Activated CD4-positive, alpha-beta T cell treated with anti-CD3 and anti-CD28 coated beads, Interleukin-2, amount 10 ng/mL, durations not matched to agents 24 days and 14 days (primary cell): ENCODE measurements at regions of chr5 and their contacts with region 1.

Region 1: GRCh38 chr5:80960531-80961375 is 590 bp downstream of the RASGRF2 start:
- DNase-seq: peak; percentile 84
- H3K4me3 Mint-ChIP-seq: peak overlapping the region; percentile 89
- H3K27ac Mint-ChIP-seq: peak overlapping the region; percentile 82
- H3K4me1 Mint-ChIP-seq: peaks cover 48% of the 10 kb centered on the region
- H3K27me3 Mint-ChIP-seq: peaks cover 5% of the 10 kb centered on the region

Region 2: GRCh38 chr5:80754900-80755299 is 205.9 kb before region 1 on chr5:
- intact Hi-C with region 1: loop called (anchors 1 kb)
- DNase-seq: peak; percentile 79
- H3K4me3 Mint-ChIP-seq: peak overlapping the region; percentile 66
- H3K27ac Mint-ChIP-seq: peak overlapping the region; percentile 96
- H3K4me1 Mint-ChIP-seq: peaks cover 63% of the 10 kb centered on the region
- H3K27me3 Mint-ChIP-seq: no peaks in the 10 kb centered on the region

Region 3: DNA sequence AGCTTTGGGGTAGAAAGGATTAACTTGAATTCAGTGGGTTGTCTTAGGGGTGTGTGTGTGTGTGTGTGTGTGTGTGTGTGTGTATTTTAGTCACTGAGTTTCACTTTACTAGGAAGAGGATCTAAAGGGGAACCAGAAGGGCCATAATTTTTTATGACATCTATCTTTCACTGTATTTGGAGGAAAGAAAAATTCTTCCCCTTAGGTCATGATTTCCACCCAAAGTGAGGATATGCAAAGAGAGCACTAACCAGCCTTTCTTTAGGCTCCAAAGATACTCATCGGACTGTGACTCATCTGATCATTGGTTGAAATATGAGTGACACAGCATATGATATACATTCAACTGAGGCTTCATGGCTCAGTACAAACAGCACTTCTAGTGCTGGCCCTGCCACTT is 75.8 kb before region 1 on chr5:
- intact Hi-C with region 1: loop called (anchors 2 kb)
- DNase-seq: no peak
- H3K4me3 Mint-ChIP-seq: no peak overlapping the region
- H3K27ac Mint-ChIP-seq: peak overlapping the region; percentile 72
- H3K4me1 Mint-ChIP-seq: peaks cover 17% of the 10 kb centered on the region
- H3K27me3 Mint-ChIP-seq: no peaks in the 10 kb centered on the region

Region 4: GRCh38 chr5:80895523-80895922 is 65.2 kb before region 1 on chr5:
- intact Hi-C with region 1: no loop called
- DNase-seq: no peak
- H3K4me3 Mint-ChIP-seq: no peak overlapping the region
- H3K27ac Mint-ChIP-seq: no peak overlapping the region
- H3K4me1 Mint-ChIP-seq: no peaks in the 10 kb centered on the region
- H3K27me3 Mint-ChIP-seq: no peaks in the 10 kb centered on the region

Region 5: GRCh38 chr5:80998590-80998979 is 37.8 kb after region 1 on chr5:
- intact Hi-C with region 1: no loop called
- DNase-seq: peak; percentile 71
- H3K4me3 Mint-ChIP-seq: peak overlapping the region; percentile 82
- H3K27ac Mint-ChIP-seq: peak overlapping the region; percentile 90
- H3K4me1 Mint-ChIP-seq: peaks cover 25% of the 10 kb centered on the region
- H3K27me3 Mint-ChIP-seq: no peaks in the 10 kb centered on the region

Region 6: GRCh38 chr5:81020478-81021174 is 59.9 kb after region 1 on chr5:
- intact Hi-C with region 1: loop called (anchors 1 kb)
- DNase-seq: no peak
- H3K4me3 Mint-ChIP-seq: no peak overlapping the region
- H3K27ac Mint-ChIP-seq: no peak overlapping the region
- H3K4me1 Mint-ChIP-seq: peaks cover 61% of the 10 kb centered on the region
- H3K27me3 Mint-ChIP-seq: no peaks in the 10 kb centered on the region

Region 7: GRCh38 chr5:81165493-81166119 is 204.9 kb after region 1 on chr5:
- intact Hi-C with region 1: loop called (anchors 10 kb)
- DNase-seq: peak; percentile 89
- H3K4me3 Mint-ChIP-seq: no peak overlapping the region
- H3K27ac Mint-ChIP-seq: no peak overlapping the region
- H3K4me1 Mint-ChIP-seq: peaks cover 9% of the 10 kb centered on the region
- H3K27me3 Mint-ChIP-seq: no peaks in the 10 kb centered on the region

Region 8: DNA sequence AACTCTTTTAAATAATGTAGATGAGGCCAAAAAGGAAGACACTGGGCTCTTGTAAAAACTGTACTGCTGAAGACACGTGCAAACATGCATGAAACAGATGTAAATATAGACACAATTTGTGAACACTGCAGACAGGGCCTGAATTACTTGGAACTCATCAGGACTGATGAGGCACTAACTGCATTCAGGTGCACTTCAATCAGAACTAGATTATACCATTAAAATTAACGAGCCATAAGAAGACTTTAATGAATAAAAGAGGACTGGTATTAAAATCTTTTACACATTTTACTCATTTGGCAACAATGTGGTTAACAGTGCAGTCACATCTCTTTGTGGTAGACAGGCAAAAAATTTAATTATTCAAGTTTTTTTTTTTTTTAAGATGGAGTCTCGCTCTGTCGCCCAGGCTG is 327.3 kb after region 1 on chr5:
- intact Hi-C with region 1: loop called (anchors 5 kb)
- DNase-seq: no peak
- H3K4me3 Mint-ChIP-seq: no peak overlapping the region
- H3K27ac Mint-ChIP-seq: no peak overlapping the region
- H3K4me1 Mint-ChIP-seq: peaks cover 16% of the 10 kb centered on the region
- H3K27me3 Mint-ChIP-seq: no peaks in the 10 kb centered on the region

Region 9: GRCh38 chr5:82512025-82512424 is 1551.3 kb after region 1 on chr5:
- intact Hi-C with region 1: no loop called
- DNase-seq: peak; percentile 78
- H3K4me3 Mint-ChIP-seq: no peak overlapping the region
- H3K27ac Mint-ChIP-seq: no peak overlapping the region
- H3K4me1 Mint-ChIP-seq: peaks cover 6% of the 10 kb centered on the region
- H3K27me3 Mint-ChIP-seq: no peaks in the 10 kb centered on the region